Prostate gland (tissue), 2 donors: ENCODE measurements at regions of chr12 and their contacts with region 1.

Region 1: GRCh38 chr12:77324763-77325468 is 259.5 kb upstream of the E2F7 start:
- DNase-seq: peak; percentile 44
- H3K4me3 ChIP-seq: peak overlapping the region; percentile 40 to 42
- H3K27ac ChIP-seq: no peak overlapping the region
- H3K4me1 ChIP-seq: no peaks in the 10 kb centered on the region
- H3K27me3 ChIP-seq: no peaks in the 10 kb centered on the region
- CTCF ChIP-seq: peak in 3 of 4 experiments; percentile 19 to 42 (median 41)
- POLR2A ChIP-seq: no peak

Region 2: GRCh38 chr12:77065361-77066204 is 259.3 kb before region 1 on chr12 and contains the start of gene E2F7:
- intact Hi-C with region 1: loop called (anchors 10 kb)
- DNase-seq: peak; percentile 88
- H3K4me3 ChIP-seq: peak within 1 kb of the TSS; percentile 52 to 61
- H3K27ac ChIP-seq: peak within 1 kb of the TSS; percentile 54 to 55
- H3K4me1 ChIP-seq: no peaks in the 10 kb centered on the region
- H3K27me3 ChIP-seq: no peaks in the 10 kb centered on the region
- CTCF ChIP-seq: no peak
- POLR2A ChIP-seq: peak; percentile 23
- total RNA-seq, gene E2F7: 0.36 to 3.5 TPM

Region 3: DNA sequence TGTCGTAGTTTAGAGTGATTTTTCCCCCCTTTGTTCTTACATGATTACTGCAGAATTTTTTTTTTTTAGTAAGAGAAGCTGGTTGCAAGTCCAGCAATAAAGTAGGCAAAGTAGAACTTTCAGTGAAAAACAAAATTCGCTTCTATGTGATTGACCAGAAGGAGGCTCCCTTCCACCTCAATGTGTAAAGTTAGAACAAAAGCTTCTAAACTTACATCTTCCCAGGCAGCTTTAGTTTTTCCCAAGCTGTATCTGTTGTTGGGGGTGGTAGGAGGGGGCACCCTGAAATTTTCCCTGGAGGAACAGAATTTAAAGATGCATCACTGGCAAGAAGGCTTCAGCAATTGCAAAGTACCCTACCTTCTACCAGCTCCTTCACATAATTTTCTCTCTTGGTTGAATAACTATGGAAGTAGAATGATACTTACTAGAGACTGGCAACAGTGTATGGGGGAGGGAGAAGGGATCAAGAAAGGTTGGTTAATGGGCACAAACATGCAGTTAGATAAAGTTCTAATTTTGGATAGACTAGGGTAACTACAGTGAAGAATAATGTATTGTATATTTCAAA is 172.2 kb before region 1 on chr12:
- intact Hi-C with region 1: loop called (anchors 2 kb)
- DNase-seq: no peak
- H3K4me3 ChIP-seq: no peak overlapping the region
- H3K27ac ChIP-seq: no peak overlapping the region
- H3K4me1 ChIP-seq: no peaks in the 10 kb centered on the region
- H3K27me3 ChIP-seq: no peaks in the 10 kb centered on the region
- CTCF ChIP-seq: peak in 3 of 4 experiments; percentile 22 to 53 (median 45)
- POLR2A ChIP-seq: no peak